G401 (cell line): ENCODE measurements at regions of chr1 and their contacts with region 1.

Region 1: DNA sequence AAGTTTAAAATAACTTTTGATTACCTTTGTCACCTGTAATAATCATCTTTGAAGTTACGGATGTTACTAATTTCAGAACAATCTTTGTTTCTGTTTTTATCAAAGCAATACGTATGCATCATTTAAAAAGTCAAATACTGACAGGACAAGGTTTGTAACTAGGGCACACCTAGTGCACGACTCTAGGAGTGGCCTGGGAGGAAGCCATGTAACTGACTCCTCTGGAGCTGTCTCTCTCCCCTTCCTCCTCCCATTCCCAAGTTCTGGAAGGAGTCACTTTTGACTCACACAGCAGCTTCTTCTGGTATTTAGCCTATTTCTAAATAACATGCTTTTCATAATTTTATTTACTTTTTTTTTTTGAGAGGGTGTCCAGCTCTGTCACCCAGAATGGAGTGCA is 11.8 kb upstream of the RAP1GAP start:
- DNase-seq: no peak

Region 2: DNA sequence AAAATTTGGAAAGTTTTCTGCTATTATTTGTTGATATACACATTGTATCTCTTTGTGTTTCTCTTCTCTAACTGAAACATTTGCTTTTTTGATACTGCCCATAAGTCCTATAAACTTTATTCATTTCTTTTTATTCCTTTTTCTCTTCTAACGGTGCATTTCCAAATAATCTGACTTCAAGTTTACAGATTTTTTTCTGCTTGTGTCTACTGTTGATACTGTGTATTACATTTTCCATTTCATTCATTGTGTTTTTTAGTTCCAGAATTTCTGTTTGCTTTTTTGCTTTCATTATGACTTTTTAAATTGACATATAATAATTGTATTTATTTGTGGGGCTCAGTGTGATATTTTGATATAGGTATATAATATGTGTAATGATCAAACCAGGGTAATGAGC is 1663.2 kb before region 1 on chr1:
- in situ Hi-C with region 1: no loop called
- DNase-seq: no peak

Region 3: DNA sequence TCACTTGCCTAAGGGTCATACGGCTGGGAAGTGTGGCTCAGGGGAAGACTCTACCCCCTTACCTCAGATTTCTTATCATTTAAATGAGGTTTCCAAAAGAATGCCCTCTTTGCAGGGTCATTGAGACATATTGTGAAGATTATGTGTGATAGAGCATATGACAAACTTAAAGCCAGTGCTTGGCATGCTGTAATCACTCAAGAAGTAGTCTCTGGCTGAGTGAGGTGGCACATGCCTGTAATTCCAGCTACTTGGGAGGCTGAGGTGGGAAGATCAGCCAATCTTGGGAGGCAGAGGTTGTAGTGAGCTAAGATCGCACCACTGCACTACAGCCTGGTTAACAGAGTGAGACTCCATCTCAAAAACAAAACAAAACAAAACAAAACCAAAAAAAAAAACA is 123.6 kb after region 1 on chr1:
- in situ Hi-C with region 1: no loop called
- DNase-seq: no peak

Region 4: DNA sequence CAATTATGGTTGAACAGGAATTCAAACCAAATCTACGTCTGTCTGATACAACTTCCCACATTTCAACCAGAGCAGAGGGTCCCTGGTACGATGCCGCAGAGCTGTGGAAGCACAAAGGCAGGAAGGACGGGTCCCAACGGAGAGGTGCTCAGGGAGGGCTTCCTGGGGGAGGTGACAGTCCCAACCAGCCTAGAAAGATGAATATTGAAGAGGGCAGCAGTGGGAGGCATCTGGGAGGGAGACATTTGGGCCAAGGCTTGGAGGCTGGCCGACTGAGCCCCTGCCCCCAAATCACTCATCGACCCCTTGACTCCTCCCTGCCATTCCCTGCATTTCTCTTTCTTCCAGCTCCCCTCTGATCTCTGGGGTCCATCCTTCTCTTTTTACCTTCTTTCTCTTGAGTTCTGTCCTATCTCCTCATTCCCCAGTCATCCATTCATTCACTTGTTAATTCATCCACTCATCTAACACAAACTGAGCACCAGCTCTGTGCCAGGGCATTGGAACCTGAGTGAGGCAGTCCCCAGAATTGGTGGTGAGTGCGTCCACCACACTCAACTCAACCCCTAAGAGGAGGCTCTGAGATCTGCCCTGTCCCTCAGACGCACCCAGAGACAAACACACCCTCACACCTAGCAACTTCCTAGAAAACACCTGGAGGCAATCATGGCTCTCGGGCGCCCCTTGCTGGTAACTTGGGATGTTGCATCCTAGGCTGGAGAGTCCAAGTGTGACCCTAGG is 282.7 kb after region 1 on chr1:
- in situ Hi-C with region 1: loop called (anchors 25 kb)
- DNase-seq: peak; percentile 65